IMR-90 (cell line): ENCODE measurements at regions of chr11 and their contacts with region 1.

Region 1: GRCh38 chr11:77525452-77526091 is 51.7 kb upstream of the PAK1 start:
- DNase-seq: peak; percentile 10
- ATAC-seq: no peak
- H3K4me3 ChIP-seq: no peak overlapping the region
- H3K27ac ChIP-seq: no peak overlapping the region
- H3K4me1 ChIP-seq: no peaks in the 10 kb centered on the region
- H3K27me3 ChIP-seq: no peaks in the 10 kb centered on the region; the same call in 1 of the 2 replicates
- CTCF ChIP-seq: no peak
- POLR2A ChIP-seq: no peak
- RAD21 ChIP-seq: no peak

Region 2: DNA sequence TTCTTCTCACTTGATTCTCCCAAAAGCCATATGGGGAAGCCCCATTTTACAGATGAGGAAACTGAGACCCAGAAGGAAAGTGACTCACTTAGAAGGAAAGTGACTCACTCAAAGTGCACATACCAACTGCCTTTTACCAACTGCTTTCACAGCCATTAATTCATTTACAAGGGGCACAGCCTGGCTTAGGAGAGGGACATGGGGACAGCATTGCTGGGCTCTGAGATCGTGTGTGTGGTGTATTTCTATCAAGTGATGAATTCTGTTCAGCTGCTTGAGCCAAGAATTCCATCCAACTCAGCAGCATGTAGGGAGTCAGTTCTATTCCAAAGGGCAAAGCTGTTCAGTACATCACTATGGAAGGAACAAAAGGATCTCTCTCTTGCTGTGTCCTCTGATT is 28.2 kb before region 1 on chr11:
- CTCF ChIA-PET with region 1: no interaction called
- POLR2A ChIA-PET with region 1: interaction called, 3 read pairs
- dilution Hi-C with region 1: no loop called
- in situ Hi-C with region 1: no loop called
- intact Hi-C with region 1: loop called (anchors 5 kb)
- DNase-seq: peak; percentile 13
- ATAC-seq: no peak
- H3K4me3 ChIP-seq: no peak overlapping the region
- H3K27ac ChIP-seq: no peak overlapping the region
- H3K4me1 ChIP-seq: no peaks in the 10 kb centered on the region
- H3K27me3 ChIP-seq: peaks cover 16% of the 10 kb centered on the region
- CTCF ChIP-seq: no peak
- POLR2A ChIP-seq: no peak
- RAD21 ChIP-seq: no peak